SK-N-SH (cell line): ENCODE measurements at regions of chr14 and their contacts with region 1.

Region 1: DNA sequence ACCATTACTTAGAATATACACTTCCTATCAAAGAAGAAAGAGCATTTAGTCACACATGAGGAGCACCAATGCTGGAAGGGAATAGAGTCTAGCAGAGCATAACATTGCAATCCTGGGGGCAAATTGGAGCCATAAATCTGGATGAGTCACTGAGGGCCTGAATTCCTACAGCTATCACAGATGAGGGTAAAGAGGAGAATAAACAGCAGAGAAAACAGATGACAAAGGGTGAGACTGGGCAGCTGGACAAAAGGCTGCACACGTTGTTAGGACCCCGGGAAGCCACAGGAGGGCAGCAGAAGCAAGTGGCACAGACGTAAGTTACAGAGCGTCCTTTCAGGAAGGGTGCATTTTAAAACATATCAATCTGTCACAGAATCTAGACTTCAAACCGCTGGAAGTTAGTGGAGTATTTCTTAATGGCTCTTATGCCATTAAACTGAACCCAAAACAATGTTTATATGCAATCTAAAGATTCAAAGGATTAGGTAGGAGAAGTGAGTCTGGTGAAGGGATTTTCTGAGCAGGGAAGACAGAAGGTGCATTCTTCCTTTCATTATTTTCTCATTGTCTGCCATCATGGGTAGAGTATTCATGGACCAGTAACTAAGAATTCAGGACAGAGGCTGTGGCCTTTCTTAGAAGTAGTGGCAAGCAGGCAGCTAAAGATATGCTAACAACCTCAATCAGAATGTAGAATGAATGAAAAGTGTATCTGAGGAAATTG is 159.8 kb upstream of the DAAM1 start:
- DNase-seq: peak; percentile 69
- H3K4me3 ChIP-seq: peak overlapping the region in 1 of 2 experiments; percentile 8; a peak in 1 of 4 replicates
- H3K27ac ChIP-seq: peak overlapping the region; percentile 58 to 93; a peak in 3 of 4 replicates
- H3K4me1 ChIP-seq: peaks cover 0 to 5% of the 10 kb centered on the region in 2 experiments; a peak in 2 of 4 replicates
- H3K27me3 ChIP-seq: no peaks in the 10 kb centered on the region
- CTCF ChIP-seq: peak; percentile 95
- EP300 ChIP-seq: peak in 1 of 2 experiments; percentile 93; a peak in 2 of 4 replicates
- RAD21 ChIP-seq: peak; percentile 94

Region 2: DNA sequence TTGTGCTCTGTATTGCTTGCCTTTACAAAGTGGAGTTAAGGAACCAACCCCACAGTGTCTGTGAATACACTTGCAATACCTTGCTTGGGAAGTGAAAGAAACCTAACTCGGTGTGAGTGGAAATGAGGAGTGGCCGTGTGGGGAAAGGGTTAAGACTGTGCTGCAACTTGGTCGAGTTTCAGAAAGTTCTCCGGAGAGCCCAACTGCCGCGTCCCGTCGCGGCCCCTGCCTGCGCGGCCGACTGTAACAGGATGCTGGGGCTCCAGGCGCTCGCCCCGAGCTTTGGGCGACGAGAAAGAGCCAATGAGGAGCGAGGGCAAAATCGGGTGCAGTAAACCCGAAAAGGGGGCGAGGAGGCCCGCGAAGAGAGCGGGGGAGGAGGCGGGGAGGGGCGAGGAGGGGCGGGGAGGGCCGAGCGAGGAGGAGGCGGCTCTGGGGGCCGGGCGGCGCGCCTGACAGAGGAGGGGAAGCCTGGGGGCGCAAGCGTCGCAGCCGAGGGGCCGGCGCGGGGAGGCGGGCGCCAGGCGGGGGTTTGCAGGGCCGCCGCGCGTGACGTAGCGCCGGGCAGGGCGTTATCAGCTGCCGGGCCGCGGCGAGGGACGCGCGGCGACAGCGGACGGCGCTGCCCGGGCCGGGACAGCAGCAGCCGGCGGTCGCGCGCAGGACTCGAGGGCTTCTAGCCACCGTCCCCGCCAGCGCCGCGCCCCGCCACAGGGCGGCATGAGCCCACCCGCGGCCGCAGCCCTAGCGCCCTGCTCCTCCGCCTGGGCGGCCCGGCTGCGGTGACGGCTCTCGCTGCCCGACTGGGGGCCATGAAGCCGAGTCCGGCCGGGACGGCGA is 391.0 kb before region 1 on chr14 and contains the start of gene DACT1:
- CTCF ChIA-PET with region 1: interaction called, 49 read pairs
- POLR2A ChIA-PET with region 1: no interaction called
- DNase-seq: peak; percentile 82
- H3K4me3 ChIP-seq: peak within 1 kb of the TSS; percentile 74 to 77
- H3K27ac ChIP-seq: peak within 1 kb of the TSS; percentile 43 to 73
- H3K4me1 ChIP-seq: peaks cover 14 to 16% of the 10 kb centered on the region in 2 experiments; a peak in 3 of 4 replicates
- H3K27me3 ChIP-seq: no peaks in the 10 kb centered on the region
- CTCF ChIP-seq: no peak; the same call in 1 of the 2 replicates
- EP300 ChIP-seq: no peak
- RAD21 ChIP-seq: no peak
- polyA plus RNA-seq, gene DACT1: 3.3 and 4.2 TPM in 2 replicates

Region 3: GRCh38 chr14:59055439-59056045 is 26.9 kb after region 1 on chr14:
- CTCF ChIA-PET with region 1: interaction called, 11 read pairs
- POLR2A ChIA-PET with region 1: no interaction called
- DNase-seq: peak; percentile 65
- H3K4me3 ChIP-seq: no peak overlapping the region
- H3K27ac ChIP-seq: no peak overlapping the region
- H3K4me1 ChIP-seq: no peaks in the 10 kb centered on the region
- H3K27me3 ChIP-seq: no peaks in the 10 kb centered on the region
- CTCF ChIP-seq: peak; percentile 88
- EP300 ChIP-seq: no peak
- RAD21 ChIP-seq: peak; percentile 84

Region 4: DNA sequence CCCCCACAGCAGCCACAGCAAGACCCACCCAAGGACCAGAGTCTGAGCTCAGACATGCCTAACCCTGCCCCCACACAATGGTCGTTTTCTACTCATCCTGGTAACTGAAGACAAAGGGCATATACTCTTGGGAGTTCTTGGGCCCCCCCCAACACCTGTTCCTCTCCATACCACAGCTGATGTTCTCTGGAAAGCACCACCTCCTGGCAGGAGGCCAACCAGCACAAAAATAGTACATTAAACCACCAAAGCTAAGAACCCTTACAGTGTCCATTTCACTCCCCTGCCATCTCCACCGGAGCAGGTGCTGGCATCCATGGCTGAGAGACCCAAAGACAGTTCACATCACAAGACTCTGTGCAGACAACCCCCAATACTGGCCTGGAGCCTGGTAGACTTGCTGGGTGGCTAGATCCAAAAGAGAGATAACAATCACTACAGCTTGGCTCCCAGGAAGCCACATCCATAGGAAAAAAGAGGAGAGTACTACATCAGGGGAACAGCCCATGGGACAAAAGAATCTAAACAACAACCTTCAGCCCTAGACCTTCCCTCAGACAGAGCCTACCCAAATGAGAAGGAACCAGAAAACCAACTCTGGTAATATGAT is 79.3 kb after region 1 on chr14:
- CTCF ChIA-PET with region 1: interaction called, 11 read pairs
- POLR2A ChIA-PET with region 1: no interaction called
- DNase-seq: no peak
- H3K4me3 ChIP-seq: no peak overlapping the region
- H3K27ac ChIP-seq: no peak overlapping the region
- H3K4me1 ChIP-seq: peaks cover 0 to 4% of the 10 kb centered on the region in 2 experiments; a peak in 1 of 4 replicates
- H3K27me3 ChIP-seq: no peaks in the 10 kb centered on the region
- CTCF ChIP-seq: no peak
- EP300 ChIP-seq: no peak
- RAD21 ChIP-seq: no peak

Region 5: GRCh38 chr14:59215325-59216181 is 186.9 kb after region 1 on chr14:
- CTCF ChIA-PET with region 1: no interaction called
- POLR2A ChIA-PET with region 1: no interaction called
- DNase-seq: no peak
- H3K4me3 ChIP-seq: no peak overlapping the region
- H3K27ac ChIP-seq: no peak overlapping the region
- H3K4me1 ChIP-seq: peaks cover 3 to 9% of the 10 kb centered on the region in 2 experiments; a peak in 2 of 4 replicates
- H3K27me3 ChIP-seq: no peaks in the 10 kb centered on the region
- CTCF ChIP-seq: no peak
- EP300 ChIP-seq: no peak
- RAD21 ChIP-seq: no peak

Region 6: DNA sequence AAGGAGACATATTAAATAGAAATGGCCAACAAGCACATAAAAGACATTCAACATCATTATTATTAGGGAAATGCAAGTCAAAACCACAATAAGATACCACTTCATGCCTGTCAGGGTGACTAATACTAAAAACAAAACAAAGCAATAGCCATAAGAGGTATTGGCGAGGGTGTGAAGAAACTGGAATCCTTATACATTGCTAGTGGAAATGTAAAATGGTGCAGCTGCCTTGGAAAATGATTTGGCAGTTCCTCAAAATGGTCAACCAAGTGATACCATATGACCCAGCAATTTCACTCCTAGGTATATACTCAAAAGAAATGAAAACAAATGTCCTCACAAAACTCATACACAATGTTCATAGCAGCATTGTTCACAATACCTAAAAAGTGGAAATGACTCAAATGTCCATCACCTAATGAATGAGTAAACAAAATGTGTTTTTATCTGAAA is 409.6 kb after region 1 on chr14:
- CTCF ChIA-PET with region 1: interaction called, 13 read pairs
- POLR2A ChIA-PET with region 1: no interaction called
- DNase-seq: no peak
- H3K4me3 ChIP-seq: no peak overlapping the region
- H3K27ac ChIP-seq: peak overlapping the region in 1 of 2 experiments; percentile 65; a peak in 3 of 4 replicates
- H3K4me1 ChIP-seq: peaks cover 0 to 21% of the 10 kb centered on the region in 2 experiments; a peak in 3 of 4 replicates
- H3K27me3 ChIP-seq: no peaks in the 10 kb centered on the region
- CTCF ChIP-seq: no peak
- EP300 ChIP-seq: no peak
- RAD21 ChIP-seq: no peak